Activated CD4-positive, alpha-beta T cell treated with anti-CD3 and anti-CD28 coated beads, Interleukin-2, amount 10 ng/mL, durations not matched to agents 7 days and 5 days (primary cell): ENCODE measurements at regions of chr9 and their contacts with region 1.

Region 1: GRCh38 chr9:33287087-33287490 is 3.2 kb upstream of the NFX1 start:
- DNase-seq: peak; percentile 79
- H3K4me3 Mint-ChIP-seq: no peak overlapping the region
- H3K27ac Mint-ChIP-seq: peak overlapping the region; percentile 80
- H3K4me1 Mint-ChIP-seq: peaks cover 36% of the 10 kb centered on the region
- H3K27me3 Mint-ChIP-seq: no peaks in the 10 kb centered on the region

Region 2: DNA sequence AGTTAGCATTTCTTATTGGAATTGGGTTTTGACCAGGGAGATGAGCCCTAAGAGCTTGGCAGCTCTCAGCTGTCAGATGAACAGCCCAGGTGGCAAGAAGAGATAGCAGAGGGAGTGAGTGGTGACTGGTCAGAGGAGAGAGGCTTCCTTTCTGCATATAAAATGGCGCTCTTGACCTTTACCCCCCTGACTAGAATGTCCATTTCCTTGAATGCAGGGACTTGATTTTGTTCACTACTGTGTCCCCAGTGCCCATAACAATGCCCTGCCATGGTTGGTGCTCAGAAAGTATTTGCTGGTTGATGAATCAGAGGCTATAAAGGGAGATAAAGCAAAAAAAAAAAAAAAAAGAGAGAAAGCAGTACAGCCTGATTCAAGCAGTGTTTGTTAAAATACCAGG is 15.0 kb before region 1 on chr9:
- CTCF ChIA-PET with region 1: interaction called, 10 read pairs
- POLR2A ChIA-PET with region 1: no interaction called
- DNase-seq: no peak
- H3K4me3 Mint-ChIP-seq: no peak overlapping the region
- H3K27ac Mint-ChIP-seq: no peak overlapping the region
- H3K4me1 Mint-ChIP-seq: peaks cover 48% of the 10 kb centered on the region
- H3K27me3 Mint-ChIP-seq: no peaks in the 10 kb centered on the region

Region 3: GRCh38 chr9:33297432-33297831 is 10.3 kb after region 1 on chr9:
- CTCF ChIA-PET with region 1: interaction called, 21 read pairs
- POLR2A ChIA-PET with region 1: no interaction called
- DNase-seq: peak; percentile 12
- H3K4me3 Mint-ChIP-seq: peak overlapping the region; percentile 9
- H3K27ac Mint-ChIP-seq: peak overlapping the region; percentile 52
- H3K4me1 Mint-ChIP-seq: peaks cover 59% of the 10 kb centered on the region
- H3K27me3 Mint-ChIP-seq: no peaks in the 10 kb centered on the region

Region 4: GRCh38 chr9:33364127-33364526 is 77.0 kb after region 1 on chr9:
- CTCF ChIA-PET with region 1: no interaction called
- POLR2A ChIA-PET with region 1: no interaction called
- DNase-seq: no peak
- H3K4me3 Mint-ChIP-seq: no peak overlapping the region
- H3K27ac Mint-ChIP-seq: no peak overlapping the region
- H3K4me1 Mint-ChIP-seq: no peaks in the 10 kb centered on the region
- H3K27me3 Mint-ChIP-seq: no peaks in the 10 kb centered on the region